Heart right ventricle (tissue), 16 donors: ENCODE measurements at regions of chr18 and their contacts with region 1.

Region 1: GRCh38 chr18:42298759-42299675 is 344.0 kb downstream of the PIK3C3 start:
- DNase-seq: peak; percentile 55 to 78
- ATAC-seq: peak; percentile 82 to 93 (median 88)
- H3K4me3 ChIP-seq: peak overlapping the region in 7 of 10 donors; percentile 15 to 40 (median 25)
- H3K27ac ChIP-seq: peak overlapping the region in 5 of 10 donors; percentile 11 to 47 (median 35)
- H3K4me1 ChIP-seq: peaks cover 0 to 4% (median 0%) of the 10 kb centered on the region in 9 donors
- H3K27me3 ChIP-seq: no peaks in the 10 kb centered on the region
- CTCF ChIP-seq: peak; percentile 75 to 95 (median 91)

Region 2: GRCh38 chr18:42229211-42230210 is 69.5 kb before region 1 on chr18:
- intact Hi-C with region 1: no loop called
- DNase-seq: no peak
- ATAC-seq: peak in 1 of 8 donors; percentile 16
- H3K4me3 ChIP-seq: no peak overlapping the region
- H3K27ac ChIP-seq: no peak overlapping the region
- H3K4me1 ChIP-seq: no peaks in the 10 kb centered on the region
- H3K27me3 ChIP-seq: no peaks in the 10 kb centered on the region
- CTCF ChIP-seq: no peak

Region 3: GRCh38 chr18:42586601-42587000 is 287.6 kb after region 1 on chr18:
- intact Hi-C with region 1: loop called in 1 of 10 experiments (anchors 10 kb)
- DNase-seq: no peak
- ATAC-seq: no peak
- H3K4me3 ChIP-seq: no peak overlapping the region
- H3K27ac ChIP-seq: no peak overlapping the region
- H3K4me1 ChIP-seq: no peaks in the 10 kb centered on the region
- H3K27me3 ChIP-seq: no peaks in the 10 kb centered on the region
- CTCF ChIP-seq: no peak

Region 4: DNA sequence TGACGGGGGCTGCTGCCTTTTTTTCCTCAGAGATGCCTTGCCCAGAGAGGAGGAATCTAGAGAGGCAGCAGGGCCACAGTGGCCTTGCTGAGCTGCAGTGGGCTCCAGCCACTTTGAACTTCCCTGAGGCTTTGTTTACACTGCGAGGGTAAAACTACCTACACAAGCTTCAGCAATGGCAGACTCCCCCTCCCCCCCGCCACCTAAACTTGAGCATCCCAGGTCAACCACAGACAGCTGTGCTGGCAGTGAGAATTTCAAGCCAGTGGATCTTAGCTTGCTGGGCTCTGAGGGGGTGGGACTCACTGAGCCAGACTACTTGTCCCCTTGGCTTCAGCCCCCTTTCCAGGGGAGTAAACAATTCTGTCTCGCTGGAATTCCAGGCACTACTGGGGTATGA is 966.4 kb after region 1 on chr18:
- intact Hi-C with region 1: loop called in 9 of 10 experiments (anchors 5 to 10 kb)
- DNase-seq: no peak
- ATAC-seq: no peak
- H3K4me3 ChIP-seq: no peak overlapping the region
- H3K27ac ChIP-seq: no peak overlapping the region
- H3K4me1 ChIP-seq: no peaks in the 10 kb centered on the region
- H3K27me3 ChIP-seq: no peaks in the 10 kb centered on the region
- CTCF ChIP-seq: no peak

Region 5: DNA sequence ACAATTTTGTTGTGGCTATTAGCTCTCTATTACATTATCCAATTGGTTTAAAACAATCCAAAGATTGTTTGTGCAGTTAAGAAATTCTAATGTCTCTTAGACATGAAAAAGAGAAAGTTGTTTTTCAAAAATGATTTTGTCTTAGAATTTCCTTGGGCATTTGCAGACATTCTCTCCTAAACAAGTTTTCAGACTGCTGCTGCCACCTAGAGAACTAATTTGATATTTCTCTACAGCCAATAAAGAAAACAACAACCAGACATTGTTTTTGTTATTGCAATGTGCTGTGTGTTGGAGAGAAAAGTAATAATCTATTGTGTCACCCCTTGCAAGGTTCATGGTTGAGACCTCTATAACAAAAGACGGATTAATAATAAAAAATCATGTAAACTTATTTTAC is 1097.2 kb after region 1 on chr18:
- intact Hi-C with region 1: loop called in 2 of 10 experiments (anchors 10 kb)
- DNase-seq: no peak
- ATAC-seq: no peak
- H3K4me3 ChIP-seq: no peak overlapping the region
- H3K27ac ChIP-seq: no peak overlapping the region
- H3K4me1 ChIP-seq: no peaks in the 10 kb centered on the region
- H3K27me3 ChIP-seq: no peaks in the 10 kb centered on the region
- CTCF ChIP-seq: peak in 7 of 9 donors; percentile 29 to 56 (median 42)

Region 6: GRCh38 chr18:43596105-43596712 is 1297.2 kb after region 1 on chr18:
- intact Hi-C with region 1: loop called in 1 of 10 experiments (anchors 10 kb)
- DNase-seq: no peak
- ATAC-seq: peak in 1 of 8 donors; percentile 62
- H3K4me3 ChIP-seq: no peak overlapping the region
- H3K27ac ChIP-seq: no peak overlapping the region
- H3K4me1 ChIP-seq: no peaks in the 10 kb centered on the region
- H3K27me3 ChIP-seq: no peaks in the 10 kb centered on the region
- CTCF ChIP-seq: peak in 8 of 9 donors; percentile 26 to 61 (median 50)